ENCODE measurements at regions of chr11 and their contacts with region 1.

Region 1: DNA sequence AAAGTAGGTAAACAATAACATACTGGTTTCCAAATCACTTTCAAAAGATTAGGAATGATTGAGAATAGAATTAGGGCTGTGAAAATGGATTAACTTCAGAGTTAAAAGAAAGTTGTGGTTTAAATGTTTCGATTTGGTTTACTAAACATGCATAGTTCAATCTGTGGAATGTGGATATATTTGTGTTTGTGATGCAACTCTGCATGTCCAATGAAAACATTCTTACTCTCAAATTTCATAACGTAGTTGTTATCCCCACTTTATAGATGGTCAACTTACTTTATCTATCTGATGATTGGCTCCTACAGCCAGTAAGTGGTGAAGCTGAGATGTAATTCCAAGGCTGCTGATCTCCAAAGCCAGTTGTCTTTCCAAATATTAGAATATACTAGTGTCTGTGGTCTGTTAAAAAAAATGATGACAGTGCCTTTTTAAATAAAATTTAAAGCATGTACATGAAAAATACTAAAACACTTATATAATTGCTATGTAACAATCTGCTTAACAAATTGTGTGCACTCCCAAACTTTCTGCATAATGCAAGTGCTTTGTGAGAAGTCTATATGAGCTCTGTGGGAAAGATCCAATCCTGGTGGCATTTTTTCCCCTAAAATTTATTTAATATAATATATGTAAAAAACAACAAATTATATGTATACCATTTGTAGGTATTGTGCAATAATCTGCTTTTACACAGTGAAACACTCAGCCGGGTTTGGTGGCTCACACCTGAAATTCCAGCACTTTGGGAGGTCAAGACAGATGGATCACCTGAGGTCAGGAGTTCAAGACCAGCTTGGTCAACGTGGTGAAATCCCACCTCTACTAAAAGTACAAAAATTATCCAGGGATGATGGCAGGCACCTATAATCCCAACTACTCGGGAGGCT is 9.7 kb upstream of the SIK3 start:
- DNase-seq: no peak
- ATAC-seq: no peak
- H3K4me3 ChIP-seq: no peak overlapping the region
- H3K27ac ChIP-seq: no peak overlapping the region
- H3K4me1 ChIP-seq: no peaks in the 10 kb centered on the region
- H3K27me3 ChIP-seq: no peaks in the 10 kb centered on the region
- CTCF ChIP-seq: no peak

Region 2: GRCh38 chr11:116879800-116880625 is 227.9 kb before region 1 on chr11:
- intact Hi-C with region 1: loop called (anchors 5 kb)
- DNase-seq: no peak
- ATAC-seq: peak; percentile 79 to 88
- H3K4me3 ChIP-seq: no peak overlapping the region
- H3K27ac ChIP-seq: no peak overlapping the region
- H3K4me1 ChIP-seq: peaks cover 5% of the 10 kb centered on the region
- H3K27me3 ChIP-seq: no peaks in the 10 kb centered on the region
- CTCF ChIP-seq: peak; percentile 70

Region 3: DNA sequence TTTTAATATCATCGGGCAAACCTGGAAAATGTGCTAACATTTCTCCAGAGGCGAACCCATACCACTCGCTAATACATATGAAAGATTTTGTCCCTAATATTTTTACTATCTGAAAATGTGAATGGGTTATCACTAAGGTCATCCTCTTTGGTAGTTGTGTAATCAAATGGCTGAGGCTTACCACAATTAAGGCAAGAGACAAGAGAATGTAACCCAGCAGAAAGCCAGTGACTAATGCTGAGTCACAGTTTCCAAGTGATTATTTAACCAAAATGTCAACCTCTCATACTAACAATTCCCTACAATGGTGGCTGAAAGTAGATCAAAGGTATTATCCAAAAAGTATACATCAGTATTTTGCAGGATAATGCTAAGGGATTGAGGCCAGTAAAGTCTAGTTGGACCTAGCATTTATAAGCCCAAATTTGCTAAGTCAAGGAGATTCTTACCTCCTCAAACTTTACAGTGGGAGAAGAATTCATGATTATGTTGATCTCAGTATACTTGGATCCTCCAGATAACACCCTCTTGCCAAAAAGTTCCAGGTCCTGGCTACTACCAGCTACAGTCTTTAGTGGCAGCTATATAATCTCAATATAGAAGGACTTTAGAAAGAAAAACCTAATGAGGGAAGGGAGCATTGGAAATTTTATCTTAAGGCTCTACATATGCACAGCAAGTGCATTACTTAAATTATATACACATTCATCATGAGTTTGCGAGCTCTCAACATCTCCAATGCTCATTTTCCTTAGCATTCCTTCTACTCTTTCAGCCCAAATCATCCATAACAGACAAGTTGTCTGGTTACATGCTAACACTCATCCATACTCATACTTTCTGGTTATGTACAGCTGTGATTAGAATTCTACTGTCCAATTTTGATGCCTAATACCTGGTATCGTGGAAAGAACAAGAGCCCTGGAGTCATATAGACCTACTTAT is 35.2 kb before region 1 on chr11:
- intact Hi-C with region 1: no loop called
- DNase-seq: no peak
- ATAC-seq: peak; percentile 75
- H3K4me3 ChIP-seq: no peak overlapping the region
- H3K27ac ChIP-seq: peak overlapping the region; percentile 8
- H3K4me1 ChIP-seq: peaks cover 58% of the 10 kb centered on the region
- H3K27me3 ChIP-seq: no peaks in the 10 kb centered on the region
- CTCF ChIP-seq: no peak